Naive thymus-derived CD4-positive, alpha-beta T cell (primary cell): ENCODE measurements at regions of chr6 and their contacts with region 1.

Region 1: DNA sequence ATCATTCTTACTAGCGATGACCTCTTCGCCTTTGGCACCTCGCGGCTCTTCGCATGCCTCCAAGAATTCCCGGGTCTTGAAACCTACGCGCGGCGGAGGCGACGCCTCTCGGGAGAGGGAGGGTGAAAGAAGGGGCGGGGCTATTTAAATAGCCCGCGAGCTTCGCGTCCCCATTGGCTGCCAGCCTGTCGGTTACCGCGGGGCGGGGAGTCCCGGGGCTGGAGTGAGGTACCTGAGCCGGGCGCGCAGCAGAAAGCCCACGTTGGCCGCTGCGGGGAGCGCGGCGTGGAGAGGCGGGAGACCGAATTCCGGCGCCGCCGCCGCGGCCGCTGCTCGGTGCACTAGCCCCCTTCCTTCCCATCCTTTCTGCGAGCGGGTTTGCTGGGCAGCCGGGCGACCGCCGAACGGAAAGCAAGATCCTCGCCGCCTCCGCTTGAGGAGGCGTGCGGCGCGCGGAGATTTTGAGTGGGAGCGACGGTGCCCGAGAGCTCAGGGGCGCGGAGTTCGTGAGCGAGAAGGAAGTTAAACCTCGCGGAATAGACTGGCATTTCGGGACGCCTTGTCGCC is at the start of gene BMP6:
- DNase-seq: peak in 7 of 9 donors; percentile 10 to 73 (median 24)
- ATAC-seq: peak; percentile 79
- H3K4me3 ChIP-seq: peak within 1 kb of the TSS; percentile 20
- H3K4me3 Mint-ChIP-seq: peak within 1 kb of the TSS; percentile 58 to 90 (median 79)
- H3K27ac ChIP-seq: no peak within 1 kb of the TSS
- H3K27ac Mint-ChIP-seq: no peak within 1 kb of the TSS
- H3K4me1 ChIP-seq: peaks cover 0 to 7% of the 10 kb centered on the region in 2 donors
- H3K4me1 Mint-ChIP-seq: peaks cover 13 to 24% (median 22%) of the 10 kb centered on the region in 7 donors
- H3K27me3 ChIP-seq: peaks cover 8 to 20% of the 10 kb centered on the region in 2 donors
- H3K27me3 Mint-ChIP-seq: peaks cover 61 to 78% (median 62%) of the 10 kb centered on the region in 5 donors
- total RNA-seq, gene BMP6: 0.37 to 0.56 TPM in 2 of 5 experiments, not detected in the others

Region 2: DNA sequence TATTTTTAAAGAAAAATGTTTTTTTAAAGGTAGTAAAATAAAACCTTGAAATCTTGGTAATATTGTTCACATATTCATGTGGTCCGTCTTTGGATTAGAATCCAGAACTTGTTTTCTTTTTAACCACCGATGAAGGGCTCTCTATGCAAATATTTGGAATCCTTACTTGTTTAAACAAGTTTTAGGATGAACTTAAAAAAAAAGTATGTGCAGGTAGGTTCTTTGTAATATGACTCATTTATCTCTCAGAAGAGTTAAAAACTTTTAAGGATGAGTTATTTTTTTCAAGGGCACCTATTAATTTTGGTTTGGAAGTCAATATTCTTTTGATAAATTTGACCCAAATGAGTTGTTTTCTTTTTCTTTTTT is 175.5 kb before region 1 on chr6:
- CTCF ChIA-PET with region 1: no interaction called
- POLR2A ChIA-PET with region 1: no interaction called
- intact Hi-C with region 1: no loop called
- DNase-seq: no peak
- ATAC-seq: no peak
- H3K4me3 ChIP-seq: no peak overlapping the region
- H3K4me3 Mint-ChIP-seq: no peak overlapping the region
- H3K27ac ChIP-seq: no peak overlapping the region
- H3K27ac Mint-ChIP-seq: no peak overlapping the region
- H3K4me1 ChIP-seq: no peaks in the 10 kb centered on the region
- H3K4me1 Mint-ChIP-seq: no peaks in the 10 kb centered on the region
- H3K27me3 ChIP-seq: no peaks in the 10 kb centered on the region
- H3K27me3 Mint-ChIP-seq: peaks cover 27 to 56% (median 49%) of the 10 kb centered on the region in 5 donors

Region 3: DNA sequence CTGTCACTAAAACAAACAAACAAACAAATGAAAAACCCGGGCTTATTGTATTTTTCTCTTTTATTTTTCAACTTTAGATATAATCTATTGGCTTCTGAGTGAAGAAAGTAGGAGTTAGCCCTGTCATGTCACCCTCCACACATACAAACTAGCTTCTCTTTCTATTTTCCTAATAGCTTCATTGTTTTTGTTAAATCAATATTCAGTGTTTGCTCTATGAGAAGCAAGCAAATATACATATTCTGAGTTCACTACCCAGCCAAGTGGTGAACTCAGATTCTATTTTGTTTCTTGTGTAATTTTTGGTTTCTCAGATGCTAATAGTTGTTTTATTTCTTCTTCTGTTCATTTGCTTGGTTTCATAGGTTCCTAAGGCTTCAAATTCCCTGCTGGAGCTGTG is 69.6 kb before region 1 on chr6:
- CTCF ChIA-PET with region 1: no interaction called
- POLR2A ChIA-PET with region 1: no interaction called
- intact Hi-C with region 1: no loop called
- DNase-seq: no peak
- ATAC-seq: no peak
- H3K4me3 ChIP-seq: no peak overlapping the region
- H3K4me3 Mint-ChIP-seq: no peak overlapping the region
- H3K27ac ChIP-seq: no peak overlapping the region
- H3K27ac Mint-ChIP-seq: no peak overlapping the region
- H3K4me1 ChIP-seq: no peaks in the 10 kb centered on the region
- H3K4me1 Mint-ChIP-seq: no peaks in the 10 kb centered on the region
- H3K27me3 ChIP-seq: no peaks in the 10 kb centered on the region
- H3K27me3 Mint-ChIP-seq: peaks cover under 1 to 13% (median 8%) of the 10 kb centered on the region in 5 donors

Region 4: GRCh38 chr6:7758456-7758855 is 32.5 kb after region 1 on chr6:
- CTCF ChIA-PET with region 1: interaction called, 10 read pairs
- POLR2A ChIA-PET with region 1: no interaction called
- intact Hi-C with region 1: no loop called
- DNase-seq: no peak
- ATAC-seq: no peak
- H3K4me3 ChIP-seq: no peak overlapping the region
- H3K4me3 Mint-ChIP-seq: no peak overlapping the region
- H3K27ac ChIP-seq: no peak overlapping the region
- H3K27ac Mint-ChIP-seq: no peak overlapping the region
- H3K4me1 ChIP-seq: no peaks in the 10 kb centered on the region
- H3K4me1 Mint-ChIP-seq: no peaks in the 10 kb centered on the region
- H3K27me3 ChIP-seq: no peaks in the 10 kb centered on the region
- H3K27me3 Mint-ChIP-seq: peaks cover 11 to 42% (median 21%) of the 10 kb centered on the region in 5 donors

Region 5: GRCh38 chr6:8006208-8006607 is 280.3 kb after region 1 on chr6:
- CTCF ChIA-PET with region 1: interaction called, 6 read pairs
- POLR2A ChIA-PET with region 1: no interaction called
- intact Hi-C with region 1: loop called in 1 of 2 experiments (anchors 1 kb)
- DNase-seq: peak in 1 of 9 donors; percentile 2
- ATAC-seq: no peak
- H3K4me3 ChIP-seq: no peak overlapping the region
- H3K4me3 Mint-ChIP-seq: no peak overlapping the region
- H3K27ac ChIP-seq: no peak overlapping the region
- H3K27ac Mint-ChIP-seq: no peak overlapping the region
- H3K4me1 ChIP-seq: no peaks in the 10 kb centered on the region
- H3K4me1 Mint-ChIP-seq: peaks cover 0 to 12% (median 4%) of the 10 kb centered on the region in 7 donors
- H3K27me3 ChIP-seq: no peaks in the 10 kb centered on the region
- H3K27me3 Mint-ChIP-seq: peaks cover 0 to 4% (median 0%) of the 10 kb centered on the region in 5 donors

Region 6: GRCh38 chr6:8102122-8102958 is 376.4 kb after region 1 on chr6 and contains the start of gene EEF1E1:
- CTCF ChIA-PET with region 1: no interaction called
- POLR2A ChIA-PET with region 1: no interaction called
- intact Hi-C with region 1: loop called in 1 of 2 experiments (anchors 2 kb)
- DNase-seq: peak; percentile 77 to 97 (median 92)
- ATAC-seq: peak; percentile 100
- H3K4me3 ChIP-seq: peak within 1 kb of the TSS; percentile 75
- H3K4me3 Mint-ChIP-seq: peak within 1 kb of the TSS; percentile 85 to 100 (median 98)
- H3K27ac ChIP-seq: peak within 1 kb of the TSS; percentile 78
- H3K27ac Mint-ChIP-seq: peak within 1 kb of the TSS; percentile 91 to 99 (median 95)
- H3K4me1 ChIP-seq: peaks cover 6 to 8% of the 10 kb centered on the region in 2 donors
- H3K4me1 Mint-ChIP-seq: peaks cover 21 to 43% (median 34%) of the 10 kb centered on the region in 7 donors
- H3K27me3 ChIP-seq: no peaks in the 10 kb centered on the region
- H3K27me3 Mint-ChIP-seq: peaks cover 13 to 27% (median 18%) of the 10 kb centered on the region in 5 donors
- total RNA-seq, gene EEF1E1: 10.2 to 41.0 (median 21.0) TPM

Region 7: GRCh38 chr6:8219352-8219943 is 493.5 kb after region 1 on chr6:
- CTCF ChIA-PET with region 1: interaction called, 4 read pairs
- POLR2A ChIA-PET with region 1: no interaction called
- intact Hi-C with region 1: loop called in 1 of 2 experiments (anchors 1 kb)
- DNase-seq: peak in 7 of 9 donors; percentile 4 to 53 (median 32)
- ATAC-seq: peak; percentile 75
- H3K4me3 ChIP-seq: no peak overlapping the region
- H3K4me3 Mint-ChIP-seq: no peak overlapping the region
- H3K27ac ChIP-seq: no peak overlapping the region
- H3K27ac Mint-ChIP-seq: no peak overlapping the region
- H3K4me1 ChIP-seq: no peaks in the 10 kb centered on the region
- H3K4me1 Mint-ChIP-seq: no peaks in the 10 kb centered on the region
- H3K27me3 ChIP-seq: no peaks in the 10 kb centered on the region
- H3K27me3 Mint-ChIP-seq: peaks cover 5 to 19% (median 9%) of the 10 kb centered on the region in 5 donors